GM10248 (cell line): ENCODE measurements at regions of chr14 and their contacts with region 1.

Region 1: GRCh38 chr14:22099942-22100763 is 426.5 kb upstream of the OR4E1 start:
- DNase-seq: peak; percentile 32
- CTCF ChIP-seq: peak; percentile 62

Region 2: DNA sequence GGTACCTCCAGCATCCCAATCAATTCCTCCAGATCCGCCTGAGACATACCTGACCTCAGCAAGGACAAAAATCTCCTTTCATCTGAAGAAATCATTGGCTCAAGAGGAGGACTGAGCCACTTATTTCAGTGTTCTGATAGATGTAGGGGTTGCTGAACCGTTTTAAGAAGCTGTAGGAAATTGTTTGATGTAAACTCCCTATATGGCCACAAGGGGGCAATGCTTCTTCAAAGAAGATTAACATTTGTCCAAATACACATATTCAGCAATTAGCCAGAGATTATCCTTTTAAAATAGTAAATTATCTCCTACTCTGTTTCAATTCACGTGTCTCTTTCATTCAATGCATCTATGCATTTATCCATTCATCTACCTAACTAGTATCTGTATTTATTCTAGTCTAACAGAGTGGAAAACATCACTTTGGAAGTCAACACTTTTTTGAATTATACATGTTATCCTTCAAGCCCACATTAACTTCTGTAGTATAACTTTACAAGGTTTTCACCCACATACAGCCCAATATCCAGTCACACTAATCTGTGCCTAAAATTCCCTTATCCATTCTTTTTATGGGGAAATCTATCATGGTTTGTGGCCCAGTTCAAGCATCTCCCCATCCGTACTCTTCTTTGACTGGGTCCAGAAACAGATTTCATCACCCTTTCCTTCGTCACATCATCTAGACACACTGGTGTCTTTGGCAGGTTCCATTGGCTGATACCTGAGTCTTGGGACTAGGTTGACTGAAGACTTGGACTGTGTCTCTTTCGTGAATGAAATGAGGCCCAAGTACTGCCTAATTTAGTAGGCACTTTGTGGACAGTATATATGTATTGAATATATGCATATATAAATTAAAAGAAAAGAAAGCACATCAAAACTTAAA is 15.5 kb before region 1 on chr14:
- CTCF ChIA-PET with region 1: interaction called, 14 read pairs
- POLR2A ChIA-PET with region 1: no interaction called
- DNase-seq: peak; percentile 48
- CTCF ChIP-seq: peak; percentile 68

Region 3: GRCh38 chr14:22112004-22112403 is 11.9 kb after region 1 on chr14:
- CTCF ChIA-PET with region 1: interaction called, 23 read pairs
- POLR2A ChIA-PET with region 1: no interaction called
- DNase-seq: peak; percentile 29
- CTCF ChIP-seq: peak; percentile 49

Region 4: GRCh38 chr14:22168092-22168955 is 68.2 kb after region 1 on chr14:
- CTCF ChIA-PET with region 1: no interaction called
- POLR2A ChIA-PET with region 1: no interaction called
- DNase-seq: no peak
- CTCF ChIP-seq: no peak